WTC11 (cell line): ENCODE measurements at regions of chr1 and their contacts with region 1.

Region 1: DNA sequence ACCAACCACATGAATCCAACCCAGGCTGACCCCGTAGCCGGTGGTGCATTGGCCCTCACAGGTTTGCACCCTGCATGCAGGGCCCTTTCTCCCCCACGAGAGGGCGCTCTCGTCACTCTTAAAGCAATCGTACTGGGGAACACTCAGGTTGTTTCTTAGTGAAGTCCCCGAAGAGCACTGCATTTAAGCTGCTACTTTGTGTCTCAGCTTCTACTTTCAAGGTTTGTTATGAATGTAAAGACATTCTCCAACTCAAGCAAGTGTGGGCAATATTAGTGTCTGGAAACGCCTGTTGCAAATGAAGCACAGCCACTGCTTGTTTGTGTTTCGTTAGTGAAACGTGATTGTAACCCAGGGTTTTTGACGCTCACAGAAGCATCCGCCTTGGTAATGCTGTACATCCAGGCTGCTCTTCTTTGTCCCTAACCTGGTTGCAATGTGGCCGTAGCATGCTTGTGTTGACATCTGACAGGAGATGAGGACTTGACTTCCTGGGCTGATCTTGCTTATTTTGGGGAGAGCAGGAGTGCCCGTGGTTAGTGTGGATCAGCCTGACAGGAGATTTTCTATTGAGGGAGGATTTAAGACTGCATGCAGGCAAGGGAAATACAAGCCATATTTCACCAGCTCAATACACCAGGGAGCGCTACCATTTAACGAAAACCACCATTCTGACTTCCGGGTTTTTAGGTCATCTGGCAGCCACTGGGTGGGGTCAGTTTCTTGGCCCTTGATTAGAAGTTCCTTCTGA is 79.8 kb downstream of the ST6GALNAC3 start:
- DNase-seq: peak; percentile 87
- ATAC-seq: peak; percentile 95
- H3K4me3 Mint-ChIP-seq: peak overlapping the region; percentile 42
- H3K27ac Mint-ChIP-seq: 0 out of 2 replicates have a peak overlapping the region, but pooled peaks have one; percentile 34
- H3K4me1 Mint-ChIP-seq: peaks cover 17% of the 10 kb centered on the region
- H3K27me3 Mint-ChIP-seq: no peaks in the 10 kb centered on the region
- CTCF ChIP-seq: peak; percentile 98

Region 2: GRCh38 chr1:75908717-75909152 is 245.6 kb before region 1 on chr1:
- CTCF ChIA-PET with region 1: interaction called, 20 read pairs
- POLR2A ChIA-PET with region 1: no interaction called
- DNase-seq: peak; percentile 25
- ATAC-seq: peak; percentile 100
- H3K4me3 Mint-ChIP-seq: no peak overlapping the region
- H3K27ac Mint-ChIP-seq: no peak overlapping the region
- H3K4me1 Mint-ChIP-seq: no peaks in the 10 kb centered on the region
- H3K27me3 Mint-ChIP-seq: no peaks in the 10 kb centered on the region
- CTCF ChIP-seq: peak; percentile 30; the same call in 1 of the 2 replicates

Region 3: DNA sequence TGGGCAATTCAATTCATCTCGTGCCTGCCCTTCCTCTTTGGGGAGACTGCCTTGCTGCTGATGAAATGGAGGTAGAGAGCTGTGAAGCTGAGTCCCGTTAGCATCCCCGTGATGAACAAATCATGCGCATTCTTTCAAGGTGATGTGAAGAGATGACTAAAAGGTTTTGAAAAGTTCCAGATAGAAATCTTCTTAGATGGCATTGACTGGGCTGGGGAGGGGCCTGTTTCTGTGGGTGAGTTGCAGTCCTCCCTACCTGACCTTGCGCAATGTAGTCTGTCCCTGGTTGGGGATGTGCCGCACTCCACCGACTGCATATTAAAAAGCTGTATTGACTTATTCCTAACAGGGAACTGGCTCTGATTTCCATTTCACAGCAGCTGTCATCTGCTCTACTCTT is 30.2 kb before region 1 on chr1:
- CTCF ChIA-PET with region 1: no interaction called
- POLR2A ChIA-PET with region 1: no interaction called
- DNase-seq: no peak
- ATAC-seq: no peak
- H3K4me3 Mint-ChIP-seq: no peak overlapping the region
- H3K27ac Mint-ChIP-seq: no peak overlapping the region
- H3K4me1 Mint-ChIP-seq: peaks cover 19% of the 10 kb centered on the region
- H3K27me3 Mint-ChIP-seq: no peaks in the 10 kb centered on the region
- CTCF ChIP-seq: no peak

Region 4: DNA sequence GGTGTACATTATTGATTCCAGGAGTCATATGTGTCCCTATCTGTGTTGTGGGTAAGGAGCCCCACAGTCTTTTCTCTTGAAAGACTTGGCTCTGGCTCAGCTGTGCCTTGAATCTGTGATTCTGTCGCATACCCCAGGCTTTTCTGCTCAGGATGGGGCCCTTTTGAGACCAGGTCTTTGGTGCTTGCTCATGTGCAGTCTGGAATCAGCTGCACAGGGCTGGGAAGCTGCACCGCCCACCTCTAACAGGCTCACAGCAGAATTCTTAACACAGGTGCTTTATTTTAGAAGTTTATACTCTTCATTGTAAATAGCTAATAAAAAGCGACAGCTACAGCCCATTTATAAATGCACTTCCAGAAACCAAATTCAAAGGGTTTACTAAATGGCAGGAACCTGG is 18.5 kb before region 1 on chr1:
- CTCF ChIA-PET with region 1: interaction called, 10 read pairs
- POLR2A ChIA-PET with region 1: no interaction called
- DNase-seq: no peak
- ATAC-seq: no peak
- H3K4me3 Mint-ChIP-seq: no peak overlapping the region
- H3K27ac Mint-ChIP-seq: no peak overlapping the region
- H3K4me1 Mint-ChIP-seq: peaks cover 11% of the 10 kb centered on the region
- H3K27me3 Mint-ChIP-seq: no peaks in the 10 kb centered on the region
- CTCF ChIP-seq: no peak

Region 5: DNA sequence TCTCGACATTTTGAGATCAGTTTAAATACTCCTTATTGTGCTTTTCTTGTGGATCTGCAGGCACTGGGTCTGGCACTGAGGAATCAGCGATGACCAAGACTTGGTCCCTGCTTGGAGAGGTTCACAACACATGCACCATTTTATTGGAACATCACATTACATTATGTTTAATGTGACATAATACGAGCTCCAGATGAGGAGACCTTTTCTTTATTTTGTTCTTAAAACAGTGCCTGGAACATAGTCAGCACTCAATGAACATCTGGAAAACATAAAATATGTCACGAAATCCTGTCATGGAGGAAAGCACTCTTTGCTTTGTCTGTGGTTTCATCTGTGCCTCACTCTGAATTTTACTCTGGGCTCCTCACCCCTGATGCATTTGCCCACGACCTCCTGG is 30.8 kb after region 1 on chr1:
- CTCF ChIA-PET with region 1: no interaction called
- POLR2A ChIA-PET with region 1: no interaction called
- DNase-seq: no peak
- ATAC-seq: no peak
- H3K4me3 Mint-ChIP-seq: no peak overlapping the region
- H3K27ac Mint-ChIP-seq: no peak overlapping the region
- H3K4me1 Mint-ChIP-seq: peaks cover 18% of the 10 kb centered on the region
- H3K27me3 Mint-ChIP-seq: no peaks in the 10 kb centered on the region
- CTCF ChIP-seq: no peak

Region 6: DNA sequence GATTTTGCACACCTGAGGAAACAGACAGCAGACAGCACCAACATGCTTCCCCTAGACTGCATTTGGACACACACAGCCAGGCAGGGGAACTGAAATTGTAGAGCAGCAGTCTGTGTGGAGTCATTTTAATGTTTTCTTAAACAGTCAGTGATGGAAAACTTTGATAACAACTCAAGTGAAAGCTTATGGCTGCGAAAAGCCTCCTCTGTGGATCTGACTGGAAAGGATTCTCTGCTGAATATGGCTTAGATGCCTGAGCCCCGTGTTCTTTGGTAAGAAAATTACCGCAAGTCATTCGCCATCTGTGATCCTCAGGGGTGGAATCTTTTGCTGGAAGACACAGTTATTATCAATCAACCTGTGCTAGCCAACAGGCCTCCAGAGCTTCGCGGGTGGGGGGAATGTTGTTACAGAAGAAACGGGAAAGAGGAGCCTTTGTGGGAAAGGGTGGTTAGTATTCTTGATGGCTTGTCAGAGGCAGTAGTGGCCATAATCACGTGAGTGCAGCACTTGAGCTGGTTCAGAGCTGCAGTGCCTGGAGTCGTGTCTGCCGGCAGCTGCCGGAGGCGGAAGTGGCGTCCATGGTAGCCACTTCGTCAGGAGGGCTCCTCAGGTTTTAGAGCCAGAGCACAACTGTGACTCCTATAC is 124.8 kb after region 1 on chr1:
- CTCF ChIA-PET with region 1: no interaction called
- POLR2A ChIA-PET with region 1: no interaction called
- DNase-seq: no peak
- ATAC-seq: peak; percentile 24; the same call in 1 of the 2 replicates
- H3K4me3 Mint-ChIP-seq: no peak overlapping the region
- H3K27ac Mint-ChIP-seq: peak overlapping the region; percentile 50; the same call in 1 of the 2 replicates
- H3K4me1 Mint-ChIP-seq: peaks cover 11% of the 10 kb centered on the region
- H3K27me3 Mint-ChIP-seq: no peaks in the 10 kb centered on the region
- CTCF ChIP-seq: no peak

Region 7: GRCh38 chr1:76547916-76548315 is 393.5 kb after region 1 on chr1:
- CTCF ChIA-PET with region 1: interaction called, 17 read pairs
- POLR2A ChIA-PET with region 1: no interaction called
- DNase-seq: no peak
- ATAC-seq: peak; percentile 96
- H3K4me3 Mint-ChIP-seq: no peak overlapping the region
- H3K27ac Mint-ChIP-seq: peak overlapping the region; percentile 61; the same call in 1 of the 2 replicates
- H3K4me1 Mint-ChIP-seq: peaks cover 23% of the 10 kb centered on the region
- H3K27me3 Mint-ChIP-seq: no peaks in the 10 kb centered on the region
- CTCF ChIP-seq: no peak

Region 8: GRCh38 chr1:76568573-76569238 is 414.3 kb after region 1 on chr1:
- CTCF ChIA-PET with region 1: no interaction called
- POLR2A ChIA-PET with region 1: no interaction called
- DNase-seq: no peak
- ATAC-seq: no peak
- H3K4me3 Mint-ChIP-seq: no peak overlapping the region
- H3K27ac Mint-ChIP-seq: no peak overlapping the region
- H3K4me1 Mint-ChIP-seq: peaks cover 8% of the 10 kb centered on the region
- H3K27me3 Mint-ChIP-seq: no peaks in the 10 kb centered on the region
- CTCF ChIP-seq: no peak